Tibial artery (tissue), 4 donors: ENCODE measurements at regions of chr17 and their contacts with region 1.

Region 1: DNA sequence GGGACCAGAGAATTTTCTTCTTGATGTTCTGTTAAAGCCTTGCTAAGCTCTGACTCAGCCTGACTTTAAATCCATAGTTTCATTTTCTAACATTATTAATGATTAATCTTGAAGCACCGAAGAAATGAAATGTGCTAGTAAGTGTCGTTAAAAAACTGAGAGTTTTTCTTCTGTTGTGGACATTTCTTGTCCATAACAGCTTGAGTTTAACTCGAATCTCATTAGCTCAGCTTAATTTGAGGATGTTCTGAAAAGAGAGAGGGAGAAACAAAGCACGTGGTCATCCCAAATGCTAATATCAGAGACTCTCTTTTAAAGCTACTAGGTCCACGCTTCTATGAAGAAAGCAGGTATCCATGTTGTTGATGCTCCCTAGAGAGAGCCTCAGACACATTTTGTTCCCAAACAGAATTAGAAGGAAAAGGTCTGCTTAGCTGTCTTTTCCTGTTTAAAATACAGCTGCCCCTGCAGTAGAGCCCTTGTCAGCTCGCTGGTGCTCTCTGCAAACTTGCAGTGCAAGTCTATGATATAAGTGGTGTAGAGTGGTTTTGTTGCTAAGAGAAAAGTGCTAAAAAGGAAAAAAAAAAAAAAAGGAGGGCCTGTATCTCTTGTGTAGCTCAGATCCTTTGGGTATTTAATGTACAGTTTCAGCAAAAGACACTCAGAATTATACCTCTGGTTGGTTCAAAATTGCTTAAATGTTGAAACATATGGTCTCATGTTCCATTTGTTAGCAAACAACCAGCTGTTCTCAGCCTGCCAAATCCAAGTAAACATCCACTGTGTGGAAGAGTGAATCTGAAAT is 191.1 kb upstream of the TBX2 start:
- DNase-seq: no peak
- H3K4me3 ChIP-seq: peak overlapping the region; percentile 12 to 20
- H3K27ac ChIP-seq: peak overlapping the region; percentile 67 to 77
- H3K4me1 ChIP-seq: peaks cover 0 to 52% (median 22%) of the 10 kb centered on the region in 4 donors
- H3K27me3 ChIP-seq: no peaks in the 10 kb centered on the region
- CTCF ChIP-seq: no peak

Region 2: GRCh38 chr17:61251939-61252896 is 43.7 kb after region 1 on chr17:
- intact Hi-C with region 1: loop called (anchors 10 kb)
- DNase-seq: peak; percentile 97 to 99
- H3K4me3 ChIP-seq: no peak overlapping the region
- H3K27ac ChIP-seq: peak overlapping the region; percentile 78 to 89
- H3K4me1 ChIP-seq: peaks cover 9 to 88% (median 55%) of the 10 kb centered on the region in 4 donors
- H3K27me3 ChIP-seq: no peaks in the 10 kb centered on the region
- CTCF ChIP-seq: no peak